HEK293 (cell line): ENCODE measurements at regions of chr3 and their contacts with region 1.

Region 1: DNA sequence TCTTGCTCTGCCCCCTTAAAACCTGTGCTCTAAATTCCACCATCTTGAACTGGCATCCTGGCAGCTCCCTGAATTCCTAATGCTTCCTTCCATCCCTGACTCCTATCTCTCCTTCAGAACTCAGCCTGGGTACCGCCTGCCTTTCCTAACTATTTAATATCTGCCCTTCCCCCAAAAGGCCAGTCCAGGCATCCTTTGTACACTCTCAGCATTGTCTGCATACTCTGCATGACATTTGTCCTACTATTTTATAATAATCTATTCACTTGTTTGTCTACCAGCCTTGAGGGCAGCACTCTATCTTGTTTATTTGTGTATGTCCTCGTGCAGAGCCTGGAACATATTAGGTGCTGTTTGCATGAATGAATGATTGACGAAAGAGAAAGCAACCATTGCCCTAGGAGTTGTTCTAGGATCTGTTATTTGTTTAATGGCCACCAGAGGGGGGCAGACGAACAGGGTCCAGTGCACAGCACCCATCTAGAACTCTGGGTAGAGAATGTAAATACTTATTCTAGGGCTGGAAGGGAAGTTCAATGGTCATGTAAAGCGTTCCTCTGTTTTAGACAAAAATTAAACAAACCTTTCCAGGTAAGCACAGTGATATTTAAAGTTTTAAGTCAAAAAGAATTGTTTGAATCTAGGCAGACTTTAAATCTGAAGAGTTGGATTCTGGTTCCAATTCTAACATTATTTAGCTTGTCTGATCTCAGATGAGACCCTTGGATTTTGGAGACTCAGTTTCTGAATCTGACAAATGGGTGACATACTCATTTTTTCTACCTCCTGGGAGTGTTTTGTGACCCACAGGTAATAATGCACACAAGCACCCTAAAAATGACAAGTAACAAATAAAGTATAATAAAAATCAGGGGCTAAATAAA is 125.8 kb upstream of the GALNT15 start:
- H3K4me3 ChIP-seq: no peak overlapping the region
- H3K27ac ChIP-seq: no peak overlapping the region
- H3K4me1 ChIP-seq: no peaks in the 10 kb centered on the region
- CTCF ChIP-seq: peak; percentile 60; the same call in 1 of the 2 replicates

Region 2: DNA sequence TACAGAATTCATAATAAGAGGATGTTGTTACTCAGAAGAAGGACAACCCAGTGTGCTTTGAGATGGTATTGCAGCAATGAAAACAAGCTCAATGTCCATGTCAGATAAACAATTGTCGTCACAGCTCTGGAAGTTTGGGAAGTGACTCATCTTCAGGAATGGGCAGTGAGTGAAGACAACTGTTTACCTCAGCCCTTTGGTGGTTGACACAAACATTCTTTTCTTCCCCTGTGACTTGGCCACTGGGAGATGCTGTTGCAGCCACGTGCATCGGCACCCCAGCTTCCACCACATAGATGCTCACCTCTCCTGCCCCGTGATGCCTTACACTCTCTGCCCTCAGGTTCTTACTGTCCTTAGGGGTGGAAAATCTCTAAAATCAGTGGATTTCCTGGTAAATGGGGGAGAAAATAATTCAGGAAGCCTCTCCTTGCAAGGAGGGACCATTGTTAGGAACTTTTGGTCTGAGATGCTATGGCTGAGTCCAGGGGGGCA is 11.7 kb after region 1 on chr3:
- CTCF ChIA-PET with region 1: interaction called, 71 read pairs
- POLR2A ChIA-PET with region 1: no interaction called
- H3K4me3 ChIP-seq: no peak overlapping the region
- H3K27ac ChIP-seq: no peak overlapping the region
- H3K4me1 ChIP-seq: peaks cover 8% of the 10 kb centered on the region
- CTCF ChIP-seq: peak; percentile 66

Region 3: DNA sequence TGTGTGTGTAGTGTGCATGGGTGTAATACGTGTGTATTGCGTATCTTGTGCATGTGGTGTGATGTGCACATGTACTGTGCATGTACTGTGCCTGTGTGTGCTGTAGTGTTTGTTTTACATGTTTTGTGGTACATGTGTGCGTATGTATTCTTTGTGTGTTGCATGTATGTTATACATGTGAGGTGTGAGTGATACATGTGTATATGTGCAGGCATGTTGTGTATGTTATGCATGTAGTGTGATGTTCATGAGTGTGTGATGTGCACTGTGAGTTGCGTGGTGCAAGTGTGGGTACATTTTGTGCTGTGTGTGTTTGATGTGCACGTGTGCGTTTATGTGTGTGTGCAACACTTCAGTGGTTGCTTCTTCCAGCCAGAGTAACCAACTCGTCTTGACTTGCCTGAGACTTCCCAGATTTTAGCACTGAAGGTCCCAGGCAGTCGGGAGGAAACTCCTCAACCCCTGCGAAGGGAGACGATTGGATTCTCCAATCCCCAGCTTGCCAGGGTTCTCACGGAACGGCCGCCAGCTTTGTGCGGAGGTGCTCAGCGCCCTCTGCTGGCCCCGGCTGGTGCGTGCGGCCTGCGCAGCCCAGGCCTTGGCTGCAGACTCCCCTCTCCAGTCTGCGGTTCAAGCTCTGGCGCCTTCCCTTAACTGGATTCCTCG is 129.4 kb after region 1 on chr3:
- CTCF ChIA-PET with region 1: interaction called, 167 read pairs
- POLR2A ChIA-PET with region 1: no interaction called
- H3K4me3 ChIP-seq: no peak overlapping the region
- H3K27ac ChIP-seq: no peak overlapping the region
- H3K4me1 ChIP-seq: no peaks in the 10 kb centered on the region
- CTCF ChIP-seq: peak; percentile 95

Region 4: DNA sequence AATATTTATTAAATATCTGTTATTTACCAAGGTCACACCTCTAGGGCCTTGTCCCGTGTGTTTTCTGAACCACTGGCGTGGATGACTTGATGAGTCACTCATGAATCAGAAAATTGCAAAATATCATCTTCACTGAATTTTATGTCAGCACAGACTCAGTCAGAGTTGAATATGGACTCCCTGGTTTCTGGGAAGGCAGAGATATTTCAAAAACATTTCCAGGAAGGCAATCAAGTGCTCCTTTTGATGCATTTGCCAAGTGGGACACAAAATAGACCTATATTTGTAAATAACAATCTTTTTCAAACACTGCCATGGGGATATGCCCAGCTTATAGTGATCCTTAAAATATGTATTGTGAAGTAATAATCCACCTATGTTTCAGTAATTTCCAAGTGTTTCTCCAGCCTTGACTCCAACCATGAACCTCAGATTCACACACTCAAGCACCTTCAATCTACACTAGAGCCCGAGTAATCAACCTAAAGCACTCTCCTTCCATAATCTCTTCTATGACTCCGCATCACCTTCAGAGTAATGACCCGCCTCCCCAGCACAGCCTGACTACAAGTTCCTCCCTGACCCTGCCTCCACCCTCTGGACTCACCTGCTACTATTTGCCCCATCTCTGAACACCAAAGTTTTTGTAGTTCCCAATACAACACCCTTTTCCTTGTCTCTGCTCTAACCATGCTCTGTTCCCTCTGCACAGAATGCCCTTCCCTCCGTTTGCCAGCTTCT is 191.8 kb after region 1 on chr3:
- CTCF ChIA-PET with region 1: interaction called, 11 read pairs
- POLR2A ChIA-PET with region 1: no interaction called
- H3K4me3 ChIP-seq: no peak overlapping the region
- H3K27ac ChIP-seq: no peak overlapping the region
- H3K4me1 ChIP-seq: no peaks in the 10 kb centered on the region
- CTCF ChIP-seq: no peak

Region 5: DNA sequence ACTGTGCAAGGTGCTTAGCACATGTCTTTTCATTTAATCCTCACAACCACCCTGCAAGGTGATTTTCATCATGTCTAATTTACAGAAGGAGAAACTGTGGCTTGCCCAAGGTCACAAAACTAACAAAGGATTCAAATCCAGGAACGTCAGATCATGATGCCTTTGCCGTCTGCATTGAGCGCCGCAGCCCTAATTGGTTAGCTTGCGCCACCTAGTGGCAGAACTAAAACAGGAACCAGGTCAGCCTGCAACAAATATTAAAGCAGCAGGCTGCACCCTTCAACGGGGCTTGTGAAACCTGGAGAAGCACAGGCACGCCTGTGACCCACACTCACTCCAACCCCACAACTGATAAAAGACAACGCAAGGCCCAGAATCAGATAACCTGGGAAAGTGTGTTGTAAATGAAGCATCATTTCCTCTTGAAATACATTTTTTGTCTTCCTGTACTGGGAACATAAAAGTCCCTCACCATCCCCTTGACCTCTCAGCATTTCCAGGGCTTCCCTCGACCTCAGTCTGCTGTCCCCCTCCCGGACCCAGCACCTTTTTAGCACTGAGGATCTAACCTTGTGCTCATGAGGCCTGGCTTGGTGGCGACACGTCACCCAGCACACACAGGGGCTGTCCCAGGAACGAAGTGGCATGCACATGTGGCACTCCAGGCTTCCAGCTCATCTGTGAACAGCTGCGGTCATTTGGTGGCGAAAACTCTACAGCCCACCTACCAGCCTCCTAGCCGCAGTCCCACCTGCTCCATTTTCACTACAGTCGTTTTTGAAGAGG is 198.8 kb after region 1 on chr3:
- CTCF ChIA-PET with region 1: interaction called, 16 read pairs
- POLR2A ChIA-PET with region 1: no interaction called
- H3K4me3 ChIP-seq: no peak overlapping the region
- H3K27ac ChIP-seq: no peak overlapping the region
- H3K4me1 ChIP-seq: no peaks in the 10 kb centered on the region
- CTCF ChIP-seq: peak; percentile 83